HEK293 (cell line): ENCODE measurements at regions of chr15 and their contacts with region 1.

Region 1: GRCh38 chr15:69160141-69160993 is at the start of gene GLCE:
- H3K4me3 ChIP-seq: peak within 1 kb of the TSS; percentile 94
- H3K27ac ChIP-seq: peak within 1 kb of the TSS; percentile 94
- H3K4me1 ChIP-seq: peaks cover 27% of the 10 kb centered on the region
- CTCF ChIP-seq: no peak

Region 2: DNA sequence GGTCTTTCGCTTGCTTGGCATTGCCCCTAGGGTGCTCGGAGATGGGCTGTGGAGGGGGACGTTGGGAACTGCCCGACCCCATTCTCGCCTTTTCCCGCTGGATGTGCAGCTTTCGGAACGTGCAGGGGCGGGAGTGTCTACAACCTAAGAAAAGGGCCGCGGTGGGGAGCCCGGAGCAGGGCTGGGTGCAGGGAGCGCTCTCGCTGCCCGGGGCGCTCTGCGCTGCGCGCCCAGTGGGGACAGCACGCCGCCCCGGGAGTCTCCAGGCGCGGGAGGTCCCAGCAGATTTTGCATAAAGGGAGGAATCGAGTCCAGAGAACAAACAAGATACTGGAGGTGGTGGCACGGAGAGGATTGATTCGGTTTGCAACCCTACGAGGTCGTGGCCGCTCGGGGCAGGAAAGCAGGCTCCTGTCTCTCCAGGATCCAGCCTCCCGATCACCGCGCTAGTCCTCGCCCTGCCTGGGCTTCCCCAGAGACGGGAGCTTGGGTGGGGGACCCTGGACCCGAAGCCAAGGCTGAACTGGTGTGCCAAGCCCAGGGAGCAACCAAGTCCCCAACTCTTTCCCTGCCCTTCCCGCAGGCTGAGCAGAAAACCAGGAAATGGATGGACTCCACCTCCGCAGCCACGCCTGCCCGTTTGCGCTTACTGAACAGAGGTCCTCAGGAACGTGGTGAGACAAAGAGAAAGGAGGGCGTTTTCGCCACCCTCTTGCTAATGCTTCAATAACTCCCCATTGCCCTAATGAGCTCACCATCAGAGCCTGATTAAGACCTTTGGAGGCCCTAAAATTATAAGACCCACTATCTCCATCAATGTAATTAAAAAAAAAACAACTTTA is 86.1 kb before region 1 on chr15:
- CTCF ChIA-PET with region 1: no interaction called
- POLR2A ChIA-PET with region 1: interaction called, 19 read pairs
- H3K4me3 ChIP-seq: peak overlapping the region; percentile 64
- H3K27ac ChIP-seq: peak overlapping the region; percentile 74; the same call in 1 of the 2 replicates
- H3K4me1 ChIP-seq: peaks cover 14% of the 10 kb centered on the region
- CTCF ChIP-seq: peak; percentile 85

Region 3: DNA sequence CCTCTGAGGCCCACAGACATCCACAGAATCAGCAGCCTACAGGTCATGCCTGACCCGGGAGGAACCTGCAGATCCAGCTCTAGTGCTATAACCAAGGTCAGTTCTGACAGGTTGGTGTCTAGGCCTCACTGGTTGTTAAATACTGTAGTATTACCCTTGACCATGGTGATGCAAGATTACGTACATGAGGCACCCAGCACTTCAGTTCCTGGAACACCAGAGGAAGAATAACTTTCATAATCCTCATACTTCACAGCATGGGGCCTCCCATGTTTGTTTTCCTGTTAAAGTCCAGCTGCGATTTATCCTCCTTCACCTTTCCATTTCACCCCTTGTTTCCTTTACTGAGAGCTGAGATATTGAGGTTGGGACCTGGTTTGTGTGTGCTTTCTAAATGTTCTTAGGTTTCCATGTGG is 34.3 kb before region 1 on chr15:
- CTCF ChIA-PET with region 1: no interaction called
- POLR2A ChIA-PET with region 1: no interaction called
- H3K4me3 ChIP-seq: no peak overlapping the region
- H3K27ac ChIP-seq: peak overlapping the region; percentile 13; the same call in 1 of the 2 replicates
- H3K4me1 ChIP-seq: peaks cover 10% of the 10 kb centered on the region; the same call in 1 of the 2 replicates
- CTCF ChIP-seq: no peak

Region 4: GRCh38 chr15:69145694-69146492 is 14.5 kb before region 1 on chr15:
- CTCF ChIA-PET with region 1: interaction called, 5 read pairs
- POLR2A ChIA-PET with region 1: interaction called, 20 read pairs
- H3K4me3 ChIP-seq: no peak overlapping the region
- H3K27ac ChIP-seq: peak overlapping the region; percentile 70
- H3K4me1 ChIP-seq: peaks cover 40% of the 10 kb centered on the region
- CTCF ChIP-seq: no peak

Region 5: GRCh38 chr15:69172828-69173227 is 12.5 kb after region 1 on chr15:
- CTCF ChIA-PET with region 1: interaction called, 5 read pairs
- POLR2A ChIA-PET with region 1: interaction called, 29 read pairs
- H3K4me3 ChIP-seq: no peak overlapping the region
- H3K27ac ChIP-seq: no peak overlapping the region
- H3K4me1 ChIP-seq: peaks cover 22% of the 10 kb centered on the region
- CTCF ChIP-seq: no peak

Region 6: DNA sequence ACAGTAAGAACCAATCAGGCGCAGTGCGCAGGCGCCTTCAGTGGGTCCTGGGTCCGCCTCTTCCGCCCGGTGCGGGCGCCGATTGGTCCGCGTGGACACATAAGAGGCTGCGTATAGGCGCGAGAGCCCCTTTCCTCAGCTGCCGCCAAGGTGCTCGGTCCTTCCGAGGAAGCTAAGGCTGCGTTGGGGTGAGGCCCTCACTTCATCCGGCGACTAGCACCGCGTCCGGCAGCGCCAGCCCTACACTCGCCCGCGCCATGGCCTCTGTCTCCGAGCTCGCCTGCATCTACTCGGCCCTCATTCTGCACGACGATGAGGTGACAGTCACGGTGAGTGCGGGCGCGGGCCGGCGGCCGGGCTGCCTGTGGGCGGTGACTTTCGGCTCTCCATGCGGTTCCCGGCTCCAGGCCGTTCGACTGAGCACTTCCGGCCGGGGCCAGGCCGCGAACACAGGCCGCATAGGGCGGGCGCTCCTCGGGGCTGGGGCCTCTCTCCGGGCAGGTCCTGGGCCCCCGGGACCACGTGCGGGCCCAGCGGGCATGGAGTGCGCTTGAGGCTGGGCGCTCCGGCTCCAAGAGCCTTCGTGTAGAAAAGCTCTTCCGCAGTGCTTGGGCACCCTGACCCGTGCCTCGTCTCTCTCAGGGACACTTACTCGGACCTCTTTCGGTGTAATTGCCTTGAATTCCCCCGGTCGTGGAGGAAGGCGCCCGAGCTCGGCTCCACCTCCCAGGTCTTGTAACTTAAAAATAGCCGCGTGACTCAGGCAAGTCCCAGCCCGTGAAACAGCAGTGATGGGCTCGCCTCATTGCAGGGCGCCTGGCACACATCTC is 292.5 kb after region 1 on chr15 and contains the start of gene RPLP1:
- CTCF ChIA-PET with region 1: no interaction called
- POLR2A ChIA-PET with region 1: interaction called, 10 read pairs
- H3K4me3 ChIP-seq: peak within 1 kb of the TSS; percentile 89
- H3K27ac ChIP-seq: peak within 1 kb of the TSS; percentile 78
- H3K4me1 ChIP-seq: peaks cover 10% of the 10 kb centered on the region
- CTCF ChIP-seq: peak; percentile 66